Activated CD8-positive, alpha-beta T cell treated with anti-CD3 and anti-CD28 coated beads, Interleukin-2, amount 10 ng/mL, durations not matched to agents 7 days and 5 days (primary cell): ENCODE measurements at regions of chr2 and their contacts with region 1.

Region 1: DNA sequence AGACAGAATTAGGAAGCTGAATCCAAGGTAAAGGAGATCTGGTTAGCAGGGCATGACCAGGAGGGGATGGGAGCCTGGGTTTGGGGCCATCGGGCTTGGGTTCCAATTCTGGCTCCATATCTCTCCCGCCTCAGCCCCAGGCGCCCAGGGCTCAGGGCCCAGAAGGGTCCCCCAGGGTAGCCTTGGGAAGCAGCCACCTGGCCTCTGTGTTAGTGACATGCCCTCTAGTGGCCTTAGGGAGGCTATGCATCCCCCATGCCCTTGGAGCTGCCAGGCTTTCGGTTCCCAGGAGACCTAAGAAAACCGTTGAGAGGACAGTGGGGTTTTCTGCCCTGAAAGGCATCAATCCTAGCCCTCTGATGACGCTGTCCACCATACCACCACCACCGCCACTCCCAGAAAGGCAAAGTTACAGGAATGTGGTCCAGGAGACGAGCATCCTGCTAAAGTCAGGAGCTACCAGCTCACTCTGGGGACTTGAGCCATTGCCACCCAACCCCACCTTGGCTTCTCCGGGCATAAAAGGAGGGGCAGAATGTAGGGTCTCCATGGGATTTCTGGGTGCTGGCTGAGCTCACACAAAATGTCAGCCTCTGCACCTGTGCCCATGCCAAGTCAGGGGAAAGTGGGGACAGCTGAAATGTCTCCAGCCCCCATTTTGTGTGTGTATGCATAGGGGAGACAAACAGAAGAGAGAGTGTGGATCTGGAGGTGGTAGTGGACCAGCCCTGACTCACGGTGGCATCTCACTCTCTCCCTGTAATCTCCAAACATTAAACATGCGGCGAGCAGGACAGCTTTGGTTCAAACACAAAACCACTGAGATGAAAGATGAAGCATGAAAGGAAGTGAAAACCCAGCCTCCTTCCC is 56.5 kb downstream of the EMX1 start:
- DNase-seq: peak; percentile 62
- ATAC-seq: peak; percentile 89
- H3K4me3 Mint-ChIP-seq: no peak overlapping the region
- H3K27ac Mint-ChIP-seq: no peak overlapping the region
- H3K4me1 Mint-ChIP-seq: peaks cover 6% of the 10 kb centered on the region
- H3K27me3 Mint-ChIP-seq: peaks cover 2% of the 10 kb centered on the region

Region 2: DNA sequence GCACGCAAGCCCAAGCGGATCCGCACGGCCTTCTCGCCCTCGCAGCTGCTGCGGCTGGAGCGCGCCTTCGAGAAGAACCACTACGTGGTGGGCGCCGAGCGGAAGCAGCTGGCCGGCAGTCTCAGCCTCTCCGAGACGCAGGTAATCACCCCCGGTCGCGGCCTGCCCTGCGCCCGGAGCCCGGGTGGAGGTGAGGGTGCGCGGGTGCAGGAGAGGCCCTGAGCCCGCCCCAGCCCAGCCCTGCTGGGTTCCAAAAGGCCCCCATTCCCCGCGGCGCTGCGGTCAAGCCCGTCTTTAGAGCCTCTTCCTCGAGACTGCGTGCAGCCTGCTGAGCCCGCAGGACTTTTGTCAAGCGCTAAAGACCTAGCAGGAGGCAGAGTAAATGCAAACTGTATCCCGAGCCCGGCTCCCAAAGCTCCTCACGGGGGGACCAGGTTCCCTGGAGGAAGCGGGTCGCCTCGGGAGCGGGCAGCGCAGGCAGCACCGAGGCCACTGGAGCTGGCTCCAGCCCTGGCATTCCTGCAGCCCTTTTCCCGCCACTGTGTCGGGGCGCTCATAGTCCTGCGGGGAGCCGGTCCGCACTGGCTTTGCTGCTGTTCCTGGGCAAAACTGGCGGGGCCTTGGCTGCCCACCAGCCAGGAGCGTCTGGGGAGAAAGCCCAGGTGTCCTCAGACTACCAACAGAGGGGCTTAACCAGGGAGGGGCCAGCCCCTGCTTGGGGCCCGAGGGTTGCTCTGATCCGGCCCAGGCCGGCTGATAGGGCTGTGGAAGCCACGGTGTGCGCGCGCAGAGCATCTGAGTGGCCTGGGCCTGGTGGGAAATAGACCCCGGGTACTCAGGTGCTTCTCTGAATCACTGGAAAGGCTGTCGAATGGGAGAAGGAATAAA is 49.2 kb before region 1 on chr2:
- CTCF ChIA-PET with region 1: interaction called, 23 read pairs
- POLR2A ChIA-PET with region 1: no interaction called
- DNase-seq: peak; percentile 55
- ATAC-seq: no peak
- H3K4me3 Mint-ChIP-seq: no peak overlapping the region
- H3K27ac Mint-ChIP-seq: no peak overlapping the region
- H3K4me1 Mint-ChIP-seq: peaks cover 20% of the 10 kb centered on the region
- H3K27me3 Mint-ChIP-seq: peaks cover 50% of the 10 kb centered on the region

Region 3: GRCh38 chr2:72953976-72954375 is 19.8 kb before region 1 on chr2:
- CTCF ChIA-PET with region 1: interaction called, 31 read pairs
- POLR2A ChIA-PET with region 1: no interaction called
- DNase-seq: peak; percentile 84
- ATAC-seq: peak; percentile 96
- H3K4me3 Mint-ChIP-seq: peak overlapping the region; percentile 79
- H3K27ac Mint-ChIP-seq: peak overlapping the region; percentile 92
- H3K4me1 Mint-ChIP-seq: peaks cover 40% of the 10 kb centered on the region
- H3K27me3 Mint-ChIP-seq: no peaks in the 10 kb centered on the region

Region 4: GRCh38 chr2:72963423-72964145 is 10.2 kb before region 1 on chr2:
- CTCF ChIA-PET with region 1: interaction called, 15 read pairs
- POLR2A ChIA-PET with region 1: no interaction called
- DNase-seq: no peak
- ATAC-seq: no peak
- H3K4me3 Mint-ChIP-seq: no peak overlapping the region
- H3K27ac Mint-ChIP-seq: no peak overlapping the region
- H3K4me1 Mint-ChIP-seq: peaks cover 4% of the 10 kb centered on the region
- H3K27me3 Mint-ChIP-seq: no peaks in the 10 kb centered on the region

Region 5: DNA sequence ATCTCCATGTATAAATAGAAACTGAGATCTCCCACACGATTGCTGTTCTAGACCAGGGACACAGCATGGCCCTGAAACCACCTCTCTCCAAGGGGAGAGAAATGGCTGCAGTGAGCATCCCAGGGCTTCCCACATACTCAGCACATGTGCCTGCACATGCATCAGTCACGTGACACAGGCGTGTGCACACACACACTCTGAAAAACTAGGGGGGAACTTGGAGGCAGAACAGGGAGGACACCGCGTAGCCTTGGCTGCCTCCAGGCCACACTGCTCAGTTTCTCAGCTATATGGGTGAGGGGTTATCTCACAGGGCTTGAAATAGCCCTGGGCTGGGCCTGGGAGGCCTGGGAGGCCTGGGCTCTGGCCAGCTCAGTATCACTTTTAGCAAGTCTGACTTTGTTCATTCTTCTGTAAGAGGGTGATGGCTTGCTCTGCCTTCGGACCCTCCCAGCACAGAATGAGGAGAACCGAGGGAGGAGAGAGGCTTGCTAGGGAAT is 10.4 kb after region 1 on chr2:
- CTCF ChIA-PET with region 1: interaction called, 14 read pairs
- POLR2A ChIA-PET with region 1: no interaction called
- DNase-seq: no peak
- ATAC-seq: no peak
- H3K4me3 Mint-ChIP-seq: no peak overlapping the region
- H3K27ac Mint-ChIP-seq: no peak overlapping the region
- H3K4me1 Mint-ChIP-seq: peaks cover 5% of the 10 kb centered on the region
- H3K27me3 Mint-ChIP-seq: no peaks in the 10 kb centered on the region